Activated naive CD4-positive, alpha-beta T cell treated with anti-CD3 and anti-CD28 coated beads, Interleukin-2, amount 10 ng/mL, durations not matched to agents 7 days and 5 days (primary cell): ENCODE measurements at regions of chr17 and their contacts with region 1.

Region 1: DNA sequence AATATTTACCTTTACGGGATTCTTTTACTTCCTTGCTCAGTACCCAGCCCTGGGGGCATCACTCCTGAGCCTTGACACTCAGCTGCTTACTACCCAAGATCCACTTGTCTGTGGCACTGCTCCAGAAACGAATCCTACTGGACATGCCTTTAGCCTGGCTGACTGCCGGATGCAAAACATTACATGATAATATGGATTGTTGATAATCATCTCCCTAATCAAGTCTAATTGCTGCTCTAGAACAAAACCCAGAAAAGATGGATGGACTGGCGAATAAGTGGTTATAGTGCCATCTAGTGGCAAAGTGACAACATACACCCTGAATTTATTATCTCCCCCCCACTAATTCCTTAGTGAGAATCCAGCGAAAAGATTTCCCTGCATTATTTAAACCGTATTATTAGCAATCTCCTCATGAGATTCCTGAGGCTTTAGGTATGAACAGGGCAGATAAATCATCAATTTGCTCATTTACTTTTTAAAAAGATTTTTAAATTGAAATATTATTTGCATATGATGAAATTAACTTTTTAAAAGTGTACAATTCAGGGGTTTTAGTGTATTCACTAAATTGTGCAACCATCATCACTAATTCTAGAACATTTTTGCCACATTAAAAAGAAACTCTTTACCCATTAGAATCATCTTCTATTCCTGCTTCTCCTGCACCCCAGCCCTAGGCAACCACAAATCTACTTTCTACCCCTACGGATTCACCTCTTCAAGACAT is 61.6 kb downstream of the RGS9 start:
- DNase-seq: no peak
- H3K4me3 Mint-ChIP-seq: no peak overlapping the region
- H3K27ac Mint-ChIP-seq: no peak overlapping the region
- H3K4me1 Mint-ChIP-seq: peaks cover 4% of the 10 kb centered on the region
- H3K27me3 Mint-ChIP-seq: peaks cover 16% of the 10 kb centered on the region

Region 2: GRCh38 chr17:65181237-65182061 is 17.4 kb before region 1 on chr17:
- CTCF ChIA-PET with region 1: interaction called, 16 read pairs
- DNase-seq: no peak
- H3K4me3 Mint-ChIP-seq: no peak overlapping the region
- H3K27ac Mint-ChIP-seq: peak overlapping the region; percentile 17
- H3K4me1 Mint-ChIP-seq: peaks cover 63% of the 10 kb centered on the region
- H3K27me3 Mint-ChIP-seq: peaks cover 19% of the 10 kb centered on the region

Region 3: GRCh38 chr17:65225061-65225460 is 26.2 kb after region 1 on chr17:
- CTCF ChIA-PET with region 1: no interaction called
- DNase-seq: no peak
- H3K4me3 Mint-ChIP-seq: no peak overlapping the region
- H3K27ac Mint-ChIP-seq: no peak overlapping the region
- H3K4me1 Mint-ChIP-seq: peaks cover 28% of the 10 kb centered on the region
- H3K27me3 Mint-ChIP-seq: peaks cover 46% of the 10 kb centered on the region